ENCODE measurements at regions of chr1 and their contacts with region 1.

Region 1: DNA sequence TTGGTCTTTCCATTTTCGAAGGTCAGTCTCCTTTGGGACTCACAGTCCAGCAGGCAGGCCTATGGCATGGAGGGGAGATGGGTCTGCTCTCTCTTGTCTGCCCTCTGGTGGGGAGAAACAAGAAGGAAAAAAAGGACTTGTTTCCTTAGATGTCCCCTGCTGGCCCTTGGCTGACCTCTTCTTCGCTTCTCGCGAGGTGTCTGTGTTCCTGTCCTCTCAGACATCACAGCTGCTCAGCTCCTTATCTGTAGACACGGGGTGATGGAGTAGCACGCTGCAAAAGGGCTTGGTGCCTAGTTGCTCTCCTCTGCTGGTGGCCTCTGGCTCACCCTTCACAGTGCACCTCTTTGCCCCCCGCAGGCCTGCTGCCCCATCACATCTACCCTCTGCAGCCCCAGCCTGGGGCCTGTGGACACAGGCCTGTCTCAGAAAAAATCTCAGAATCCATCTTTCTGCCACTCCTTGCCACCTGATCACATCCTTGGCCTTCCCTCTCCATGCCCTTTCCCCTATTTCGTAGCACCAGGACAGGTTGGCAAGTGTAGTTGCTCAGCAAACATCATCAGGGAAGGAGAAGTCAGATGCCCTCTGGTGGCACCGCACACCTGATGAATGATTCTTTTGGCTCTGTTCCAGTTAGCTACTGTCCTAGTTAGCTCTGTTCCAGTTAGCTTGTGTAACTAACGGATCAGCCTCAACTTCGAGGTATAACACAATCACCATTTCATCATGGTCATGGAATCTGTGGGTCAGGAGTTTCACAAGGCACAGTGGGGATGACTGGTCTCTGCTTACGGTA is 18.7 kb upstream of the AK2 start:
- DNase-seq: no peak
- ATAC-seq: no peak
- H3K4me3 Mint-ChIP-seq: no peak overlapping the region
- H3K27ac Mint-ChIP-seq: no peak overlapping the region
- H3K4me1 Mint-ChIP-seq: peaks cover 16% of the 10 kb centered on the region
- H3K27me3 Mint-ChIP-seq: no peaks in the 10 kb centered on the region
- CTCF ChIP-seq: no peak

Region 2: GRCh38 chr1:32925403-32926162 is 129.8 kb before region 1 on chr1:
- CTCF ChIA-PET with region 1: interaction called, 79 read pairs
- POLR2A ChIA-PET with region 1: no interaction called
- intact Hi-C with region 1: no loop called
- DNase-seq: no peak
- ATAC-seq: peak; percentile 47
- H3K4me3 Mint-ChIP-seq: peak overlapping the region; percentile 36
- H3K27ac Mint-ChIP-seq: no peak overlapping the region
- H3K4me1 Mint-ChIP-seq: peaks cover 19% of the 10 kb centered on the region
- H3K27me3 Mint-ChIP-seq: peaks cover 44% of the 10 kb centered on the region
- CTCF ChIP-seq: no peak

Measured in activated B cell treated with CpG ODN at 0.5 μM for 24 hours (primary cell).